Calu3 (cell line): ENCODE measurements at regions of chr5 and their contacts with region 1.

Region 1: GRCh38 chr5:683551-684481 is 9.3 kb downstream of the TPPP start:
- DNase-seq: no peak
- H3K4me3 Mint-ChIP-seq: no peak overlapping the region
- H3K27ac Mint-ChIP-seq: no peak overlapping the region
- H3K4me1 Mint-ChIP-seq: no peaks in the 10 kb centered on the region
- H3K27me3 Mint-ChIP-seq: peaks cover 8% of the 10 kb centered on the region
- CTCF ChIP-seq: no peak

Region 2: GRCh38 chr5:633501-633955 is 50.3 kb before region 1 on chr5:
- CTCF ChIA-PET with region 1: no interaction called
- intact Hi-C with region 1: no loop called
- DNase-seq: no peak
- H3K4me3 Mint-ChIP-seq: no peak overlapping the region
- H3K27ac Mint-ChIP-seq: no peak overlapping the region
- H3K4me1 Mint-ChIP-seq: no peaks in the 10 kb centered on the region
- H3K27me3 Mint-ChIP-seq: no peaks in the 10 kb centered on the region
- CTCF ChIP-seq: no peak

Region 3: DNA sequence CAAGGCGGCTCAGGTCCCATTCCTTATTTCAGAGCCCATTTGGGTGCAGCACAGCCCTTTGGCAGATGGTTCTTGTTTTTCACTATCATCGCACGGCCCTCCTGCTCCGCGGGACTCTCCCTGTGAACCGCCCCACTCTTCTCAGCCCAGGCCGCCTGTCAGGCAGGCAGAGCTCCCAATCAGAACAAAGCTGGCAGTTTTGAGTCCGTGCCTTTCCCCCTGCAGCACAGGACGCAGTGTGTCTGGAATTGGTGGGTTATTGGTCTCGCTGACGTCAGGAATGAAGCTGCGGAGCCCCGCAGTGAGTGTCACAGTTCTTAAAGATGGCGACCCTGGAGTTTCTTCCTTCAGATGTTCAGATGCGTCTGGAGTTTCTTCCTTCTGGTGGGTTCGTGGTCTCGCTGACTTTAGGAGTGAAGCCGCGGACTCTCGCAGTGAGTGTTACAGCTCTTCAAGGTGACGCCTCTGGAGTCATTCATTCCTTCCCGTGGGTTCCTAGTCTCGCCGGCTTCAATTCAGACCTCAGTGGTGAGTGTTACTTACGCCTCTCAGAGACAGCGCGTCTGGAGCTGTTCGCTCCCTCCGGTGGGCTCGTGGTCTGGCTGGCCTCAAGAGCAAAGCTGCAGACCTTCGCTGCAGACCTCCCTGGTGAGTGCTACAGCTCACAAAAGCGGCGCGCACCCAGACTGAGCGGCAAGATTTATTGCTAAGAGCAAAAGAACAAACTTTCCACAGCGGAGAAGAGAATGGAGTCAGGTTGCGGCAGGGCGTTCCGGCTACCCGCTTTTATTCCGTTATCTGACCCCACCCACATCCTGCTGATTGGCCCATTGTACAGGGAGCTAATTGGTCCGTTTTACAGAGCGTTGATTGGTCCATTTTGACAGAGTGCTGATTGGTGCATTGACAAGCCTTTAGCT is 93.2 kb after region 1 on chr5:
- CTCF ChIA-PET with region 1: interaction called, 6 read pairs
- intact Hi-C with region 1: loop called (anchors 5 kb)
- DNase-seq: no peak
- H3K4me3 Mint-ChIP-seq: no peak overlapping the region
- H3K27ac Mint-ChIP-seq: no peak overlapping the region
- H3K4me1 Mint-ChIP-seq: no peaks in the 10 kb centered on the region
- H3K27me3 Mint-ChIP-seq: peaks cover 16% of the 10 kb centered on the region
- CTCF ChIP-seq: no peak